HAP-1 (cell line): ENCODE measurements at regions of chr10 and their contacts with region 1.

Region 1: DNA sequence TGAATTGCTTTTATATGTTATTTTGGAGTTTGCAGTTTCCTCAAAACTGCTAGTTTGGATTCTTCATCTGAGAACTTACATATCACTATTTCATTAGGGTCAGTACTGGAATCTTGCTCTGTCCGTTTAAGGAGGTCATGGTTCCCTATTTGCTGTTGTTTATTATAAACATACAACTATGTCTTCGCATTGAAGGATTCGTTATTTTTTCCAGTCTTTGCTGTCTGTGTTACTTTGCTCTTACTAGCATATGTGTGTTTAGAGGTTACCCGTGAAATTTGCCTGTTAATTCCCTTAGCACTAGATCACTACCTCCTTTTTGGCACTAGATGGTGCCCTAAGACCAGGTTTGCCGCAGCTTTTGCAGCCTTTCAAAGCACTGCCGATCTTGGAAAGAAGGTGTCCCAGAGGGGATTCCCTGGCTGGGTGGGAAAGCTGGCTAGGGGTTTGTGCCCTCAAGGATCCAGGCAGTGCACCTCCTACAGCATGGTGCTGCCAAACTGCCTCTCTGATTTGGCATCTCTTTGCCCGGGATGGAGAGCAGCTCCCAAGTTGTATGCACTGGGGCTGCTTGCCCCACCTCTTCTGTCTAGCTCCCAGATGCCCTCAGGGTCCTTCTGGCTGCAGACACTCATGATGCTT is 103.1 kb upstream of the APBB1IP start:
- DNase-seq: peak; percentile 66 to 70
- H3K4me3 ChIP-seq: no peak overlapping the region
- H3K4me1 ChIP-seq: no peaks in the 10 kb centered on the region
- H3K27me3 ChIP-seq: no peaks in the 10 kb centered on the region; the same call in 1 of the 2 replicates

Region 2: GRCh38 chr10:26290236-26290635 is 44.8 kb before region 1 on chr10:
- in situ Hi-C with region 1: no loop called
- DNase-seq: no peak
- H3K4me3 ChIP-seq: no peak overlapping the region
- H3K4me1 ChIP-seq: no peaks in the 10 kb centered on the region
- H3K27me3 ChIP-seq: no peaks in the 10 kb centered on the region

Region 3: DNA sequence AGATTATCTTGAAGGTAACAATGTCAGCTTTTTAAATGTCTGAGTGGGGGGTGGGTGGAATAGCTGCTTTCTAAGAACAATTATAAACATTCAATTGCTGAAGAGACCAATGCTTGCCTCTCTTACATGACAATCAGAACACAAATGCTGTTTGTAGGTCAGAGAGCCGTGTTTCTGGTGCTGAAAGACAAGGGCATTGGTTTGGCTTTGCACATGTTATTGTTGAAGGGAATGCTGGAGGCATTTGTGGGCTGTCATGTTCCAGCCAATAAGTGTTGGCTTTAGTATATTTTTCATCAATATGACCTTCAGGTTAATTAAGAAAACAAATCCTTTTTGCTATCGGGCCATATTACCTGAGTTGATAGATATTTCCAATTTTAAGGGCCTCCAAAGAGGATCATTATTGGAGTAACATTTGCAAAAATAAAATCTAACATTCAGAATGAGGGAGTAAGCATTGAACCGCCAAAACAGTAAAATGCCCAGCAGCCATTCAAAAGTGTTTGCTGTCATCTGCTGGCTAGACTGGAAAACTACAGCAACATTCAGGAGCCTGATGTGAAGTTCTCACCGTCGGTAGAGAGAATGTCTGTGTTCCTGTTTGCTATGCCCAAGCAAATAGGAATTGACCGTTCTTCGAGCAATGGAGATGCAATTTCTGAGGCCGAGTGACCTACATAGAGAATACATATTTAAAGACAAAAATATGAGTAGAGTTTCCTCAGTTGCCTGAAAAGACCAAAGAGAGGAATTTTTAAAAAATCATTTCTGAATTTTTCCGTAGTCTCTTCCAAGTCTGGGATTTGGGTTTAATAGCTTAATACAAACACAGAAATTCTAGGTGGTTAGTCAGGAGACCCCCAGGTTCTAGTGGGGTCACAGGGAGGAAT is 221.9 kb after region 1 on chr10:
- in situ Hi-C with region 1: loop called (anchors 10 kb)
- DNase-seq: peak; percentile 28 to 47
- H3K4me3 ChIP-seq: no peak overlapping the region
- H3K4me1 ChIP-seq: peaks cover 6% of the 10 kb centered on the region
- H3K27me3 ChIP-seq: no peaks in the 10 kb centered on the region

Region 4: DNA sequence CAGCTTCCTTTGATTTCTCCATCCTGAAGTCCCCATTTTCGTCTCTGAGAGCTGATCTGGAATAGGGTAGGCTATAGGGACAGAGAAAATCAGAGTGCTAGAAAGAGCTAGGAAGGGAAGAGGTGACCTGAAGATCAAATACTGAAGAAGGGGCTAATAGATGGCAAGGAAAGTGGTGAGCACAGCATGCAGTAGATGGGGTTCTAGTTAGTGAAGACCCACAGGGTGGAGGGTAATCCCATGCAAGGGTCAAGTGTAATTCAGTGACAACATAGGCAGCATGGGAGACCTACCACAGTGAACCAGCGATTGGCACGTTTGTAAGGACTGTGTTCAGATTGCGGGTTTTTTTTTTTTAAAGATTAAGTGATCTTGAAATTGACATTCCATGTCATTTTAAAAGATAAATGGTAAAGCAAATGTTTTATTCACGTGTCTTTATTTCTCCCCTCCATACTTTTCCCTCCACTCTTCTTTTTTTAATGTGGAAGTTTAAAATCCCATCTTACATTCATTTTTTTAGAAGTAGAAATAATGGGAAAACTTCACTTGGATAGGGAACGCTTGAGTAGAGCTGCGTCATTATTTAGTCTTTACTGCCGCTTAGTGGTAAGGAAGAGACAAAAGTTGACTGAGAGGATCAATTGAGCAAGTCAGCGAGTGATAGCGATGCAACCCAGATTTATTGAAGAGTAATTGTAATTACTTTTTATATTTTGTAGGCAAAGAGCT is 546.7 kb after region 1 on chr10:
- in situ Hi-C with region 1: loop called (anchors 10 kb)
- DNase-seq: peak in 1 of 2 experiments; percentile 79
- H3K4me3 ChIP-seq: no peak overlapping the region
- H3K4me1 ChIP-seq: no peaks in the 10 kb centered on the region
- H3K27me3 ChIP-seq: no peaks in the 10 kb centered on the region